T-cell (primary cell): ENCODE measurements at regions of chr5 and their contacts with region 1.

Region 1: GRCh38 chr5:132926437-132926836 is 37.0 kb downstream of the AFF4 start:
- DNase-seq: no peak
- ATAC-seq: no peak
- H3K4me3 ChIP-seq: no peak overlapping the region
- H3K4me3 Mint-ChIP-seq: no peak overlapping the region
- H3K27ac ChIP-seq: no peak overlapping the region
- H3K27ac Mint-ChIP-seq: no peak overlapping the region
- H3K4me1 ChIP-seq: no peaks in the 10 kb centered on the region
- H3K4me1 Mint-ChIP-seq: peaks cover 16 to 29% (median 17%) of the 10 kb centered on the region in 3 donors
- H3K27me3 ChIP-seq: no peaks in the 10 kb centered on the region
- H3K27me3 Mint-ChIP-seq: no peaks in the 10 kb centered on the region

Region 2: DNA sequence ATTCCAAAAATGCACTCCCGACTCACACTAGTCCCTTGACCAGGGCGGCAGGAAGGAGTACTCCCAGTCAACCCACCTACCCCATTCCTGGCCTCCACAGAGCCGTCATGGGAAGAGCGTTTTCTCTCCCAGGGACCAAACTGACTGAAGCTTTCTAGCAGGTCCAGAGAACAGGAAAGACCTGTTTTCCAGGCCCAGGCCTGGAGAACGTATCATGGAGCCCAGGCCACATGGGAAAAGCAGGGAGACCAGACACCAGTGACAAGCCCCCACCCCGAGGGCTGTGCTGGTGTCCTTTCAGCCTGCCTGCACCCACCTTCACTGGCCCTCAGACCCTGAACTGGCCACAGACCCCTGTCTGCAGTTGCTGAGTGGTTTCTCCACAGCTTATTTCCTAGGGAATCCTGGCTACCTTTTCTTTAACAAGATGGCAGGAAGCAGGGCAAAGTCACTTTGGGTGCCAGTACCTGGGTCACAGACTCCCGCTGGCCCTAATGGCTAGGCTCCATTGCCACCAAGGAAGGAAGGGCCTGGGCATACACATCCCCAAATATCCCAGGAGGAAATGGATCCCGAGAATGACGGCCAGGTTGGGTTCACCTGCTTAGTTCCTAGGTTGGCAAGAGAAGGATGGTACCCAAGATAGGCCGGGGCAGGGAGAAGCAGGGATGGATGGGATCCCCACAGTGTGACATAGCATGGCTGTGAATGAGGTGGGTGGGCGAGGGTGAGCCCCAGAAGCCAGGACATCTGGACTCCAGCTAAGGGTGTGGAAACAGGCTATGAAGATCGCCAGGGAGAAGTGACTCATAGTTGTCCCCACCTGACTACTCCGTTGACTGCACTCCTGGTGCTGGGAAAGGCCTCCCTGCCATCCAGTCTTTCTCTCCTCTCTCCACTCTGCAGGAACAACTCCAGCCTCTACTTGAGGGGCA is 167.1 kb before region 1 on chr5:
- CTCF ChIA-PET with region 1: no interaction called
- POLR2A ChIA-PET with region 1: no interaction called
- DNase-seq: no peak
- ATAC-seq: no peak
- H3K4me3 ChIP-seq: no peak overlapping the region
- H3K4me3 Mint-ChIP-seq: no peak overlapping the region
- H3K27ac ChIP-seq: no peak overlapping the region
- H3K27ac Mint-ChIP-seq: no peak overlapping the region
- H3K4me1 ChIP-seq: no peaks in the 10 kb centered on the region
- H3K4me1 Mint-ChIP-seq: no peaks in the 10 kb centered on the region
- H3K27me3 ChIP-seq: no peaks in the 10 kb centered on the region
- H3K27me3 Mint-ChIP-seq: no peaks in the 10 kb centered on the region

Region 3: DNA sequence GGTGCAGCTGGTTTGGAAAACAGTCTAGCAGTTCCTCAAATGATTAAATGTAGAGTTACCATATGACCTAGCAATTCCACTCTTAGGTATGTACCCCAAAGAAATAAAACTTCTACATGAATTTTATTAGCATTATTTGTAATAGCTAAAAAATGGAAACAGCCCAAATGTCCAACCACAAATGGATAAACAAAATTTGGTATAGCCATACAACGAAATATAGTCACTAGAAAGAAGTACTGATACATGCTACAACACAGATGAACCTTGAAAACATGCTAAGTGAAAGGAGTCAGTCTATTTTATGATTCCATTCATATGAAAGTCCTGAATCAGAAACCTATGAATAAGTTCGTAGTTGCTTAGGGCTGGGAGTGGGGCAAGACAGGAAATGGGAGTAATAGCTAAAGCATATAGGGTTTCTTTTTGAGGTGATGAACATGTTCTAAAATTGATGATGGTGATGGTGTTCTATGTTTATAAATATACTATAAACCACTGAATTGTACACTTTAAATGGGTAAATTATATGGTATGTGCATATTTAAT is 66.5 kb before region 1 on chr5:
- CTCF ChIA-PET with region 1: no interaction called
- POLR2A ChIA-PET with region 1: no interaction called
- DNase-seq: no peak
- ATAC-seq: no peak
- H3K4me3 ChIP-seq: no peak overlapping the region
- H3K4me3 Mint-ChIP-seq: no peak overlapping the region
- H3K27ac ChIP-seq: no peak overlapping the region
- H3K27ac Mint-ChIP-seq: no peak overlapping the region
- H3K4me1 ChIP-seq: no peaks in the 10 kb centered on the region
- H3K4me1 Mint-ChIP-seq: no peaks in the 10 kb centered on the region
- H3K27me3 ChIP-seq: peaks cover 0 to 18% of the 10 kb centered on the region in 2 experiments
- H3K27me3 Mint-ChIP-seq: peaks cover 3 to 6% of the 10 kb centered on the region in 2 donors

Region 4: GRCh38 chr5:132963175-132964104 is 37.0 kb after region 1 on chr5 and contains the start of gene AFF4:
- CTCF ChIA-PET with region 1: no interaction called
- POLR2A ChIA-PET with region 1: interaction called in 1 of 2 experiments, 17 read pairs
- DNase-seq: peak; percentile 63 to 89 (median 77)
- ATAC-seq: peak; percentile 77 to 83 (median 82)
- H3K4me3 ChIP-seq: peak within 1 kb of the TSS; percentile 75 to 76
- H3K4me3 Mint-ChIP-seq: peak within 1 kb of the TSS; percentile 91 to 96 (median 93)
- H3K27ac ChIP-seq: peak within 1 kb of the TSS; percentile 94
- H3K27ac Mint-ChIP-seq: peak within 1 kb of the TSS; percentile 95 to 96
- H3K4me1 ChIP-seq: peaks cover 12 to 27% of the 10 kb centered on the region in 2 experiments
- H3K4me1 Mint-ChIP-seq: peaks cover 40% of the 10 kb centered on the region in 3 donors
- H3K27me3 ChIP-seq: no peaks in the 10 kb centered on the region
- H3K27me3 Mint-ChIP-seq: no peaks in the 10 kb centered on the region
- total RNA-seq, gene AFF4: 44.2 to 74.1 (median 53.0) TPM

Region 5: GRCh38 chr5:133111299-133111698 is 184.9 kb after region 1 on chr5:
- CTCF ChIA-PET with region 1: no interaction called
- POLR2A ChIA-PET with region 1: no interaction called
- DNase-seq: peak; percentile 44 to 90 (median 73)
- ATAC-seq: peak; percentile 68 to 79 (median 72)
- H3K4me3 ChIP-seq: no peak overlapping the region
- H3K4me3 Mint-ChIP-seq: no peak overlapping the region
- H3K27ac ChIP-seq: no peak overlapping the region
- H3K27ac Mint-ChIP-seq: no peak overlapping the region
- H3K4me1 ChIP-seq: peaks cover 4 to 17% of the 10 kb centered on the region in 2 experiments
- H3K4me1 Mint-ChIP-seq: peaks cover 21 to 28% (median 27%) of the 10 kb centered on the region in 3 donors
- H3K27me3 ChIP-seq: peaks cover 0 to 4% of the 10 kb centered on the region in 2 experiments
- H3K27me3 Mint-ChIP-seq: no peaks in the 10 kb centered on the region

Region 6: DNA sequence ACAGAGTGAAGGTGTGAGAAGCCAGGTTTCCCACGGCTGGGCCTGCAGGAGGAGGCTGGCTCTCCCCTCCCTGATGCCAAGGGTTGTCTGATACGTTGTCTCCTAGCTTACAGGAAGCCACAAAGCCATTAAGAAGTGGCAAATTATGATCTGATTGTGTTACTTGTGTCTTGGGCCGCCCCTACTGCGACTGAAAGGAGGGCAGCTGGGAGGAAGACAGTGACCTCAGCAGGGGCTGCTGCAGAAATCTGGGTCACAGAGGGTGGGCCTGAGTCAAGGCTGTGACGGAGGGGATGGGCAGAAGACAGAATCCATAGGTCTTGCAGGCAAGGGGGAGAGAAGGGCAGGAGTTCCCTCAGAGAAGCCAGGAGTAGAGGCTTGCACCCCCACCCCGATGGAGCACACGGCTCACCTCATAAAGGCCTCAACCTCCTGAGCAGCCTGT is 540.9 kb after region 1 on chr5:
- CTCF ChIA-PET with region 1: no interaction called
- POLR2A ChIA-PET with region 1: no interaction called
- DNase-seq: peak in 25 of 35 experiments; percentile 4 to 49 (median 18)
- ATAC-seq: peak; percentile 60 to 87 (median 72)
- H3K4me3 ChIP-seq: no peak overlapping the region
- H3K4me3 Mint-ChIP-seq: no peak overlapping the region
- H3K27ac ChIP-seq: peak overlapping the region; percentile 80
- H3K27ac Mint-ChIP-seq: no peak overlapping the region
- H3K4me1 ChIP-seq: peaks cover 13 to 32% of the 10 kb centered on the region in 2 experiments
- H3K4me1 Mint-ChIP-seq: peaks cover 4 to 28% (median 8%) of the 10 kb centered on the region in 3 donors
- H3K27me3 ChIP-seq: peaks cover 0 to 2% of the 10 kb centered on the region in 2 experiments
- H3K27me3 Mint-ChIP-seq: peaks cover 0 to 1% of the 10 kb centered on the region in 2 donors